ENCODE measurements at regions of chr20 and their contacts with region 1.

Region 1: GRCh38 chr20:9359561-9360308 is 154.7 kb upstream of the LAMP5 start:
- H3K4me3 Mint-ChIP-seq: no peak overlapping the region
- H3K27ac Mint-ChIP-seq: no peak overlapping the region
- H3K4me1 Mint-ChIP-seq: no peaks in the 10 kb centered on the region
- H3K27me3 Mint-ChIP-seq: no peaks in the 10 kb centered on the region

Region 2: DNA sequence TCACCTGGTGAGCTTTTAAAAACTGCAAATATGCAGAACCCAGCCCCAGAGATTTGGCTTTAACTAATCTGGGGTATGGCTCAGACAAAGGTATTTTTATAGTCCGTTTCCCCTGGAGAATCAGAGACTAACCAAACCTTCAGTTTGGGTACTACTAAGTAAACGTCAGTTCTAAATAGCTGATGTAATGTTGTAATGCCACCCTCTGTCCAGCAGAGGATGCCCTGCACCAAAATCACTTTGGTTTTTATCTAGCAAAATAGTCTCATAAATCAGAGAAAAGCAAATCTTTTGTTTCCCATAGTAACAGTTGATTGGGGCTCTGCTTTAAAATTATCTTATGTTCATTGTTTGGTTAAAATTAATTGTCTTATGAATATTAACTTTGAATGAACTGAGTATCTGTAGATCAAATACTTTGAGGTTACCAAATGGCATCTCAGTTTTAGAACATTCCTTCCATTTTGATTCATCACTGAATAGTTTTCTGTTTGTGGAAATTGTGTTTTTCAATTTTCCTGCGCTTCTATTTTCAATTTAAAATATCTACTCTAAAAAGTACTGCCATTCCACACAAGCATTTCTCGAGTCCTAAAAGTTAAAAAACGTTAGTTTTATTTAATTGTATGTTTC is 569.2 kb before region 1 on chr20:
- intact Hi-C with region 1: loop called (anchors 1 kb)
- H3K4me3 Mint-ChIP-seq: no peak overlapping the region
- H3K27ac Mint-ChIP-seq: no peak overlapping the region
- H3K4me1 Mint-ChIP-seq: peaks cover 10% of the 10 kb centered on the region
- H3K27me3 Mint-ChIP-seq: no peaks in the 10 kb centered on the region

Region 3: GRCh38 chr20:9215539-9215938 is 144.2 kb before region 1 on chr20:
- intact Hi-C with region 1: loop called (anchors 5 kb)
- H3K4me3 Mint-ChIP-seq: no peak overlapping the region
- H3K27ac Mint-ChIP-seq: no peak overlapping the region
- H3K4me1 Mint-ChIP-seq: peaks cover 6% of the 10 kb centered on the region
- H3K27me3 Mint-ChIP-seq: no peaks in the 10 kb centered on the region

Region 4: DNA sequence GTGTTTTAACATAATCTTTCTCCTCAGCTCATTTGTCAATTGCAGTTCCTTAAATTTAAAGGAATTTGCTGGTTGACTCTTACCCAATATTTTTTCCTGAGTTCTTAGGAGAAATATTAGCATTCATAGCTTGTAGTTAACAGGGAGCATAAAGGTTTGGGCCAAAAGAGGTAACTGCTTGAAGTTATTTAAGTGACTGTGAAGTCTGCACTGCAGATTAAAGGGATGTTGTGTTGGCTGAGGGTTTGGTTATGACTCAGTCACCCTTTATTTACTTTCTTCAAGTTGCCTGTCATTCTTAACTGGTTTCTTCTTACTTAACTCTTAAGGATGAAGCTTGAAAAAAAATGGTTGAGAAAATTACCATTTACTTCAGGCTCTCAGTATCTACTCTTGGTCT is 65.7 kb before region 1 on chr20:
- intact Hi-C with region 1: no loop called
- H3K4me3 Mint-ChIP-seq: no peak overlapping the region
- H3K27ac Mint-ChIP-seq: no peak overlapping the region
- H3K4me1 Mint-ChIP-seq: peaks cover 5% of the 10 kb centered on the region
- H3K27me3 Mint-ChIP-seq: no peaks in the 10 kb centered on the region

Region 5: DNA sequence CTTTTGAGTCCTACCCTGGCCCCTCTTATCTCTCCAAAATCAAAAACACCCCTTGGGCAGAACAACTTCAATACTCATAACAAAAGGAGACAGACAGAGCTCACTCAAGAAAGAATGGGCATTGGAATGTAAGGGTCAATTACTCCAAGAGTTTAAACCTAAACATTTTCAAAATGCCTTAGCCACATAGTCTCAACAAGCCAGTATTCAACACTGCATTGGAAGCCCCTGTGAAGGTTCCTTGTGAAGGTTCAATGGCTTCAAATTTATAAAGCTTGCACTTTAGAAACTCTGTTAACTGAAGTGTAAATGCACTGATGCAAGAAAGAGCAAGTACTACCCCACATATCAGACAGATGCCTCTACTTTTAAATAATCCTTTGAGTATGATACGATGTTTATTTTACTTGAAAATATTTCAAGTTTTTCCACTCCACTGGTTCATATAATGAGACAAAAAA is 15.5 kb after region 1 on chr20:
- intact Hi-C with region 1: no loop called
- H3K4me3 Mint-ChIP-seq: no peak overlapping the region
- H3K27ac Mint-ChIP-seq: no peak overlapping the region
- H3K4me1 Mint-ChIP-seq: no peaks in the 10 kb centered on the region
- H3K27me3 Mint-ChIP-seq: no peaks in the 10 kb centered on the region

Region 6: GRCh38 chr20:9789131-9789530 is 429.4 kb after region 1 on chr20:
- intact Hi-C with region 1: no loop called
- H3K4me3 Mint-ChIP-seq: no peak overlapping the region
- H3K27ac Mint-ChIP-seq: no peak overlapping the region
- H3K4me1 Mint-ChIP-seq: no peaks in the 10 kb centered on the region
- H3K27me3 Mint-ChIP-seq: peaks cover 2% of the 10 kb centered on the region